IMR-90 (cell line): ENCODE measurements at regions of chr3 and their contacts with region 1.

Region 1: DNA sequence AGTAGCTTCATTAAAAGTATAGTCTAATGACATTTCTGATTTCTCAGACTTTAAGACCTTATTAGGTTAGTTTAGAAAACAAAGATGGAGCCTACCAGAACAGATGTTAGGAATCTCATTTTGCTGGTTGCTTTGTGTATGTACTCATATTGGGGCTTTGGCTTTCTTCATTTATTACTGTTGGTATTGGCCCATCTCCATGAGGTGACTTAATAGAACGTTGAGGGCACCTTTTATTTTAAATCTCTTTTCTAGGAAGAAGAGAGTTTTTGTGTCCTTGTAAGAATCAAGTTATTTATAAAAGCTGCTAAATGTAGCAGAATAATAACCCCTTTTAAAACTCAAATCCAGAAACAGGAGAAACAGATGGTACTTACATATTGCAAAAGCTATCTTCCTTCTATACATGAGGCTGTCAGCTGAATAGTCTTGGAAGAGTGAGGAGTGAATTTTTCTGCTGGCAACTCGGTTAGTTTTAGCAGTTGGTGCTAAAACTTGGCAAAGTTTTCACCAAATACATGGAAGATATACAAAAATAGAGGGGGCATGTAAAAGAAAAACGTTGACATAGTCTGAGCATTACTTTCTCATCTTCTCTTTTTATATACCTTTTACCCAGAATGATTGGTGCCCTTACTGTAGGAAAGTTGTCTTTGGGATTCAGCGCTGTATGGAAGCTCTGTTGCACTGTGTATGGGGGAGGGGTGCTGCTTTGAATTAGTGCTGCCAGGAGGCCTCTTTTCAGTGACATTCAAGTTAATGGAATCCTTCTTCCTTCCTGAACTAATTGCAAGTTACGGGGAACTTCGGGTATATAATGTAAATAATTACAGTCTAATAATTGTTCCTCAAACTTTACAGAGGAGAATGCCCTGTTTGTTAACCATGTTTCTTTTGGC is 35.8 kb downstream of the CTNNB1 start:
- DNase-seq: peak; percentile 47
- ATAC-seq: no peak
- H3K4me3 ChIP-seq: no peak overlapping the region
- H3K27ac ChIP-seq: no peak overlapping the region
- H3K4me1 ChIP-seq: no peaks in the 10 kb centered on the region
- H3K27me3 ChIP-seq: no peaks in the 10 kb centered on the region
- CTCF ChIP-seq: no peak
- POLR2A ChIP-seq: no peak
- RAD21 ChIP-seq: no peak

Region 2: GRCh38 chr3:41716471-41716870 is 481.4 kb after region 1 on chr3:
- CTCF ChIA-PET with region 1: no interaction called
- POLR2A ChIA-PET with region 1: no interaction called
- dilution Hi-C with region 1: no loop called
- in situ Hi-C with region 1: no loop called
- intact Hi-C with region 1: loop called (anchors 5 kb)
- DNase-seq: peak; percentile 37
- ATAC-seq: no peak
- H3K4me3 ChIP-seq: no peak overlapping the region
- H3K27ac ChIP-seq: no peak overlapping the region
- H3K4me1 ChIP-seq: no peaks in the 10 kb centered on the region; the same call in 1 of the 2 replicates
- H3K27me3 ChIP-seq: no peaks in the 10 kb centered on the region
- CTCF ChIP-seq: peak; percentile 59
- POLR2A ChIP-seq: no peak
- RAD21 ChIP-seq: peak; percentile 54